ENCODE measurements at regions of chr4 and their contacts with region 1.

Region 1: DNA sequence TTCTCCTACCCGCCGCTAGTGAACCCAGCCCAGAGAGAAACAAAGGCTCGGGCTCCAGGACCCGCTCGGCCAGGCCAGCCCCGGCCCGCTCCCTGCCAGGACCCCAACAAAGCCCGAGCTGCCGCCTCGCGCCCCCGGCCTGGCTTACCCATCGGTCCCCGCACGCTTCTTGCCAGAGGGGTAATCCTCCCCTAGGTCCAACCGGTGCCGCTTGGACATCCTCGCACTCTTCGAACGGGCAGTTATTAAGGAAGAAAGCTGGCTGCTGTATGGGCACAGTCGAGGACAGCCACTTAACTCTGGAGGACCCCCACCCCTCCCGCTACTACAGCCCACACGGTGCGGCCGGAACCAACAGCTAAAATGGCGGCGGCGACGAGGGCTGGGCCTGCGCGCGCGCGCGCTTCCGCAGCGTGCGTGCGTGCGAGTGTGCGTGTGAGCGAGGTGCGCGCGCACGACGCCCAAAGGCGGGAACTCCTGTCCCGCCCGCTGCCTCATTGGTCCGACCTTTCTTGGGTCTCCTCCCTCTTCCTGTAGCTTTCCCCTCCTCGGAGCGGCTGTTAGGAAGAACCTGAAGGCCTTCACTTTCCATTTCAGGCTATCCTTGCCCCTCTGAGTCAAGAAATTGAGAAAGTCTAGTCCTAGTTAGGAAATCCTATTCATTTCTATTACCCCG is at the start of gene DHX15:
- DNase-seq: peak; percentile 90
- H3K4me3 Mint-ChIP-seq: peak within 1 kb of the TSS; percentile 100
- H3K27ac Mint-ChIP-seq: peak within 1 kb of the TSS; percentile 100
- H3K4me1 Mint-ChIP-seq: peaks cover 25% of the 10 kb centered on the region
- H3K27me3 Mint-ChIP-seq: peaks cover 2% of the 10 kb centered on the region
- total RNA-seq, gene DHX15: 246 and 260 TPM in 2 replicates

Region 2: DNA sequence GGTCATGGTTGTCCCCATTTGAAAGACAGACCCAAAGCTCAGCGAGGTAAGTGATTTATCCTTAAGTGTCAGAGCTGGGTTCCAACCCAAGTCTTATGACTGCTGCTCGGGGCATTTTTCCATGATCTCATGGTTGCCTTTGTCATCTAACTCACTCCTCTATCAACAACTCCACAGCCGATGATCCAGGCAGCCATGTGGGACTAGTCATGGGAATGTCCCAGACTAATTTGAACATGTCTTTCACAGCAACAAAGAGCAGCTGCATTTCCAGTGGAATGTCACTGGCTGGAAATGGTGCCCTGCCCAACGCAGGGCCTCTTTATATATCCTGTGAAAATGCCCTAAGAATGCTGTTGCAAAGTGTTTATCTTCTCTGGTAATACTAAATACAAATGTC is 409.7 kb before region 1 on chr4:
- intact Hi-C with region 1: no loop called
- DNase-seq: no peak
- H3K4me3 Mint-ChIP-seq: no peak overlapping the region
- H3K27ac Mint-ChIP-seq: no peak overlapping the region
- H3K4me1 Mint-ChIP-seq: no peaks in the 10 kb centered on the region
- H3K27me3 Mint-ChIP-seq: no peaks in the 10 kb centered on the region

Region 3: DNA sequence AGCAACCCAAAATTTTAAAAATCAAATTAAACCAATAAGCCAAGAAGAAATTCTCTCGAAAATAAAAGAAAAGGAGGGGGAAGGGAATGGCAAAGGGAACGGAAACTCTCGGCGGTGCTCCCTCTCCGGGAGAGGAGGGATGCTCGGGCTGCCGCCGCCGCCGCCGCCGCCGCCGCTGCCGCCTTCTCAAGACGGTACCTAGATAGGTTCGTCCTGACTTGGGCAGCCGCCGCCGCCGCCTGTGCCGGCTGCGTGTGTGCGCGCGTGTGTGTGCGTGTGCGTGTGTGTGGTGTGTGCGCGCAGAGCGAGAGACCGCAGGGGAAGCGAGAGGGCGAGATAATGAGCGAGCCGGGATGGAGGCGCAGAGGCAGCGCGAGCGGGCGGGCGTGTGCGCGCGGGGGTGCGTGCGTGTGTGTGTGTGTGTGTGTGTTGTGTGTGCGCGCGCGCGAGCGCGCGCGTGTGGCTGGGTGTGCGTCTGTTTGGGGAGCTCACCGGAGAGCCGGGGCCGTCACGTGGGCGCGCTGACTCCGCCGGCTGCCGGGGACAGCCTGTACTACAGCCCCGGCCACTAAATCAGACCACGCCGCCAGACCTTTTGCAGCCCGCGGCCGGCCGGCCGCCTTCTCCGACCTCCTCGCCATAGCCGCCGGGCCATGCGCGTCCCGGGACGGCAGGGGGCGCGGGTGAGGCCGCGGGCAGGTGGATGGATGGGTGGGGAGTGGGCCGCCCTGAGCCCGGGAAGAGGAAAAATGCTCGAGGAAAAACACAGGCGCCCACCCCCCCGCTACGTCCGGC is 111.6 kb before region 1 on chr4:
- intact Hi-C with region 1: loop called (anchors 1 kb)
- DNase-seq: peak; percentile 43
- H3K4me3 Mint-ChIP-seq: peak overlapping the region; percentile 92
- H3K27ac Mint-ChIP-seq: peak overlapping the region; percentile 92
- H3K4me1 Mint-ChIP-seq: peaks cover 47% of the 10 kb centered on the region
- H3K27me3 Mint-ChIP-seq: peaks cover 62% of the 10 kb centered on the region

Region 4: GRCh38 chr4:24537025-24537424 is 47.3 kb before region 1 on chr4:
- intact Hi-C with region 1: loop called (anchors 5 kb)
- DNase-seq: no peak
- H3K4me3 Mint-ChIP-seq: no peak overlapping the region
- H3K27ac Mint-ChIP-seq: no peak overlapping the region
- H3K4me1 Mint-ChIP-seq: peaks cover 41% of the 10 kb centered on the region
- H3K27me3 Mint-ChIP-seq: no peaks in the 10 kb centered on the region

Region 5: DNA sequence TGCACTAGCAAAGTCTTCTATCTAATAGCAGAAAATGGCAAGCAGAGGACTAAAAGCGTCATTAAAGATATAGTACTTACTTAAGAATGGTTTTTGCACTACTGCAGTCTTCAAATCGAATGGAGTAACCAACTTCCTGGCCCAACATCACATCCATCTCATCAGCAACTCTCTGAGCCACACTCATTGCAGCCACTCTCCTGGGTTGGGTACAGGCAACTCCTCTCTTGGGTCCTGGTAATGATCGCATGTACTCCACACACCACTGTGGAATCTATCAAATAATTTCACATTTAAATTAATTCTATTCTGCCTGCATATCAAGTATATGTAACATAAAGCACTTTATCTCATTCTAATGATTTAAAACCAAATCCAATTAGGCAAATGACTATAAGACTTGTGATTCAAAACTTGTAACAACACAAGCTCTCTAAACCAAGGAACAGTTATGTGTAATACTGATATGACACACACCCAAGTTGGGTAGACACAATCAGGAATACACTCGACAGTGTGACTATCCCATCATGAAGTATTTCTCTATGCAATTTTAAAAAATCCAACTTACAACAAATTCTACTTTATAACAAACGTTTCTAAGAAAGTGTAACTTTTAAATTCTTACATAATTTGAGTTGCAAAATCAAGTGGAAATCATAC is 13.6 kb before region 1 on chr4:
- intact Hi-C with region 1: loop called (anchors 1 kb)
- DNase-seq: no peak
- H3K4me3 Mint-ChIP-seq: no peak overlapping the region
- H3K27ac Mint-ChIP-seq: peak overlapping the region; percentile 25
- H3K4me1 Mint-ChIP-seq: peaks cover 65% of the 10 kb centered on the region
- H3K27me3 Mint-ChIP-seq: no peaks in the 10 kb centered on the region

Region 6: GRCh38 chr4:25159884-25160713 is 575.8 kb after region 1 on chr4 and contains the start of gene SEPSECS:
- intact Hi-C with region 1: loop called (anchors 1 kb)
- DNase-seq: peak; percentile 93
- H3K4me3 Mint-ChIP-seq: peak within 1 kb of the TSS; percentile 91
- H3K27ac Mint-ChIP-seq: peak within 1 kb of the TSS; percentile 90
- H3K4me1 Mint-ChIP-seq: peaks cover 36% of the 10 kb centered on the region
- H3K27me3 Mint-ChIP-seq: peaks cover 3% of the 10 kb centered on the region
- total RNA-seq, gene SEPSECS: 13.4 and 15.3 TPM in 2 replicates

Region 7: GRCh38 chr4:25376754-25377571 is 792.6 kb after region 1 on chr4 and contains the start of gene ANAPC4:
- intact Hi-C with region 1: loop called (anchors 1 kb)
- DNase-seq: peak; percentile 95
- H3K4me3 Mint-ChIP-seq: no peak within 1 kb of the TSS
- H3K27ac Mint-ChIP-seq: peak within 1 kb of the TSS; percentile 91
- H3K4me1 Mint-ChIP-seq: no peaks in the 10 kb centered on the region
- H3K27me3 Mint-ChIP-seq: no peaks in the 10 kb centered on the region
- total RNA-seq, gene ANAPC4: 36.0 and 39.9 TPM in 2 replicates

Measured in activated T-helper 1 cell treated with anti-CD3 and anti-CD28 coated beads, Interleukin-12 subunit alpha, Interleukin-12 subunit beta, Interleukin-2, Interleukin-4 antibody, amounts not matched to agents 30 ng/mL and 10 ng/mL and 1 ng/mL, durations not matched to agents 14 hours and 24 hours and 36 hours (primary cell).